Natural killer cell (primary cell): ENCODE measurements at regions of chr9 and their contacts with region 1.

Region 1: DNA sequence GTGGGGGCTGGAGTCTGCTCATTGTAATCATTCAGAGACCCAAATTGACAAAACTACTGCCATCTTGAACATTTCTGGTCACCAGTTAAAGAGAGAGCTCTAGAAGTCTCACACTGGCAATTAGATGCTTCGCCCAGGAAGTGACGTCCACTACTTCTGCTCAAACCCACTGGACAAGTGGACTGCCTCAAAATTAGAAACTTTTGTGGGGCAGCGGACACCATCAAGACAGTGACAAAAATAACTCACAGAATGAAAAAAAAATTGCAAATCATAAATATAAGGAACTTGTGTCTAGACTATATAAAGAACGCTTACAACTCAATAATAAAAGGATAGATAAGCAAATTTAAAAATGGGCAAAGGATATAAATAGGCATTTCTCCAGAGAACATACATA is 9.8 kb upstream of the SLC46A2 start:
- DNase-seq: no peak
- ATAC-seq: no peak
- H3K4me3 ChIP-seq: no peak overlapping the region
- H3K4me3 Mint-ChIP-seq: no peak overlapping the region
- H3K27ac ChIP-seq: no peak overlapping the region
- H3K27ac Mint-ChIP-seq: no peak overlapping the region
- H3K4me1 ChIP-seq: no peaks in the 10 kb centered on the region
- H3K4me1 Mint-ChIP-seq: no peaks in the 10 kb centered on the region
- H3K27me3 ChIP-seq: no peaks in the 10 kb centered on the region
- H3K27me3 Mint-ChIP-seq: peaks cover 21 to 38% of the 10 kb centered on the region in 2 donors
- CTCF ChIP-seq: no peak

Region 2: GRCh38 chr9:112844771-112845542 is 55.5 kb before region 1 on chr9:
- intact Hi-C with region 1: loop called (anchors 5 kb)
- DNase-seq: peak; percentile 73 to 80
- ATAC-seq: peak; percentile 72 to 88 (median 81)
- H3K4me3 ChIP-seq: no peak overlapping the region
- H3K4me3 Mint-ChIP-seq: peak overlapping the region; percentile 47
- H3K27ac ChIP-seq: no peak overlapping the region
- H3K27ac Mint-ChIP-seq: peak overlapping the region in 1 of 2 donors; percentile 0
- H3K4me1 ChIP-seq: peaks cover 14% of the 10 kb centered on the region
- H3K4me1 Mint-ChIP-seq: peaks cover 10 to 26% of the 10 kb centered on the region in 2 donors
- H3K27me3 ChIP-seq: no peaks in the 10 kb centered on the region
- H3K27me3 Mint-ChIP-seq: peaks cover 0 to 2% of the 10 kb centered on the region in 2 donors
- CTCF ChIP-seq: peak; percentile 98